GM18951 (cell line): ENCODE measurements at regions of chr1 and their contacts with region 1.

Region 1: GRCh38 chr1:23188434-23188884 is 19.8 kb upstream of the LUZP1 start:
- POLR2A ChIP-seq: no peak

Region 2: DNA sequence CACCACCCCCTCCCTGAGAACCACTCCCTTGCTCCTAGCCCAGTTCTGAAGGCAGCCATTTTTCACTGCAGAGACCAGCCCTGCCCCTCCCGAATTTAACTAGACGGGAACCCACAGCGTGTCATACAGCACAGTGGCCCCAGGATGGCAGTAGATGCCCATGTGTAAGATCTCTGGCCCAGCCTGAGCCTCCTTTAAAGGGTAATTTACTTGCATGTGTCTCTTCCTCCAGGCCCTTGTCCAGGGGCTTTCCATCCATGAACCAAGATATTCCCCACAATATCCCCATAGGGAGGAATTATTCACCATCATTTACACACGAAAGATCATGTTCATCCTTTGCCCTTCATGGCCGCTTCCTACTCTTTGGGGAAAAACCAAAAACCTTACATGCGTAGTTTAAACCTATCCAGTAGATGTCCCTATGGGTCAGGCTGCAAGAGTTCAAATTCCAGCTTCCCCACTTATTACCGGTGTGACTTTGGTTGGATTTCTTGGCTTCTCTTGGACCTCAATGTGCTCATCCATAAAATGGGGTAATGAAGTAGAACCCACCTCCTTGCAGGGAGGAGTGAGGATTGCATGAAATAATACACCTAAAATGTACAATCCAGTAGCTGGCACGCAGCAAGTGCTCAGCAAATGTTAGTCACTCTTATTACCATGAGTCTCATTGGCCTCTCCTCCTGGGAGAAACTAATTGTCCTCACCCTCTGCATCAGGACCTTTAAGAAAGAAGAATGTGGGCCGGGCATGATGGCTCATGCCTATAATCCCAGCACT is 211.8 kb before region 1 on chr1:
- in situ Hi-C with region 1: loop called (anchors 5 kb)
- POLR2A ChIP-seq: no peak

Region 3: GRCh38 chr1:23098463-23099170 is 89.8 kb before region 1 on chr1:
- in situ Hi-C with region 1: loop called (anchors 5 kb)
- POLR2A ChIP-seq: no peak

Region 4: DNA sequence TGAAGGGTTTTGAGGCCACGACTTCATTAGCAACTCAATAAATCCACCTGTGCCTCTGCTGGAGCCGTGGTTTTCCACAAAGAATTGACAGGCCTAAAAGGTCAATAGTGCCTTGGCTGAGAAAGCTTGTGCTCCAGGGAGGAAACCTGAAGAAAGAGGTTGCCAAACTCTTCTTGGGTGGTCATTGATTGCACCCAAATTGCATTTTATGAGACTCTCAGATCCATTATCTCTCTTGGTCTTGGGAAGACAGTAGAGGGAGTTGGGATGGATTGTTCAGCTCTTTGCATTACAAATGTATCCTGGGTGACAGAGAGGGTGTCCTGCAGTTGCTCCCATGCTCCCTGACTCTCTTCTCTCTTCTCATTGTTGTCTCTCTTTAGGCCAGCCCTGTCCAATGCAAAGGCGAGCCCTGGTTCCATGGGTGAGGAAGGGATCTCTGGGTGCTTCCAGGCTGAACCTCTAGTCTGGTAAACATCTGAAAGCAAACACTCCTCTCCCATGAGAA is 75.0 kb after region 1 on chr1:
- in situ Hi-C with region 1: no loop called
- POLR2A ChIP-seq: no peak